Activated CD4-positive, alpha-beta memory T cell treated with anti-CD3 and anti-CD28 coated beads, Interleukin-2, amount 10 ng/mL, durations not matched to agents 7 days and 5 days (primary cell): ENCODE measurements at regions of chr2 and their contacts with region 1.

Region 1: DNA sequence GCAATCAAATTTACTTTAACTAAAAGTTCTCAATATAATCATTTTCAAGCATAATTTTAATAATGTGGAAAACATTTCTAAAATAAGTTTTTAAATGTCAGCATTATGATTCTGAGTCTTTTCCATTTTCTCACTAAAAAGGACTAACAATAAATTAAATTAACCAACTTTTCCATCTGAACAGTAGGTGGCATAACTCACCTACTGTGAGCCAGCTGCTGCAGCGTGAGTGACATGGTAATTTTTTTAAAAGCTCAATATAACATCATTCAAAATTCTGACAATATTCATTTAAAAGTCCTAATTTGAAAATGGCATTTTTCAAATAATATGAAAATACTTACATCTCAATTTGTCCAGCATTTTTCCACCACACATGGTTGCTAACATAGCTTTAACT is 66.5 kb downstream of the DTNB start:
- DNase-seq: no peak
- H3K4me3 Mint-ChIP-seq: no peak overlapping the region
- H3K27ac Mint-ChIP-seq: no peak overlapping the region
- H3K4me1 Mint-ChIP-seq: peaks cover 15% of the 10 kb centered on the region
- H3K27me3 Mint-ChIP-seq: no peaks in the 10 kb centered on the region

Region 2: GRCh38 chr2:25592766-25593292 is 14.1 kb before region 1 on chr2:
- CTCF ChIA-PET with region 1: interaction called, 31 read pairs
- POLR2A ChIA-PET with region 1: interaction called, 3 read pairs
- DNase-seq: no peak
- H3K4me3 Mint-ChIP-seq: no peak overlapping the region
- H3K27ac Mint-ChIP-seq: peak overlapping the region; percentile 29
- H3K4me1 Mint-ChIP-seq: peaks cover 43% of the 10 kb centered on the region
- H3K27me3 Mint-ChIP-seq: no peaks in the 10 kb centered on the region

Region 3: DNA sequence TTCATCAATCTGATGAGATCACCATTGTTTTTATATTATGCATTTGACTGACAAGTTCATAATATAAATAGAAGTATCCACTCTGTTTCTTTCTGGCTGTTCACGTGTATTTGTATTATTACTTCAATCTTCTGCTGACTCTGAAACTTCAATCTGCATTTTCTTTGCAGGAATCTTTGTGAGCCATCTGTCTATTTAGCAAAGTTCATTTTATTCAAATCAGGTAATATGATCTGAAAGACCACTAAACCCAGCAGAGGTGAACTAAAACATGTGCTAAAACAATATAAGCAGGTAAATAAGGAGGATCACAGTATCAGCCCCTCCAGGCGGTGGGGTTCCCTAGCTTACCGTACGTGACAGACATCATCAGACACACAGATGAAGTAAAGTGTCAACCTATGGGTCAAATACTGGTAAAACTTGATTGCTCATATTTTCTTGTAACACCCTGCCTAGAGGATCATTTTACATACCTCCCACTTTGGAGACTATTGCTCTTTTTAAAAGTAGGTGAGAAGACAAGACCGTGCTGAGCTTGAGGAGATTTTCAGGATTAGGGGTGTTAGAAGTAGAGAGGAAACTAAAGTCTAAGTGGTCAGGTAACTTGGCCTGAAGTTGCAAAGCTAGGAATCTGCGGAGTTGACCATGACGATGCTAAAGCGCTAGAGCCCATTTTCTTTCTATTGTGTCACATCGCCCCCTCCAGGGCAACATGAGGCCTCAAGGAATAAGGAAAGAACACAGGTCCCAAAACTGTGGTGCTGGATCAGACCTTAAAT is 57.5 kb after region 1 on chr2:
- CTCF ChIA-PET with region 1: interaction called, 32 read pairs
- POLR2A ChIA-PET with region 1: no interaction called
- DNase-seq: no peak
- H3K4me3 Mint-ChIP-seq: no peak overlapping the region
- H3K27ac Mint-ChIP-seq: no peak overlapping the region
- H3K4me1 Mint-ChIP-seq: peaks cover 6% of the 10 kb centered on the region
- H3K27me3 Mint-ChIP-seq: peaks cover 2% of the 10 kb centered on the region

Region 4: GRCh38 chr2:25787013-25787412 is 180.1 kb after region 1 on chr2:
- CTCF ChIA-PET with region 1: no interaction called
- POLR2A ChIA-PET with region 1: no interaction called
- DNase-seq: no peak
- H3K4me3 Mint-ChIP-seq: no peak overlapping the region
- H3K27ac Mint-ChIP-seq: no peak overlapping the region
- H3K4me1 Mint-ChIP-seq: peaks cover 38% of the 10 kb centered on the region
- H3K27me3 Mint-ChIP-seq: no peaks in the 10 kb centered on the region